ENCODE measurements at regions of chr11 and their contacts with region 1.

Region 1: GRCh38 chr11:12235947-12236743 is 125.8 kb downstream of the MICAL2 start:
- DNase-seq: peak; percentile 89
- ATAC-seq: peak; percentile 86
- H3K4me3 Mint-ChIP-seq: peak overlapping the region; percentile 31
- H3K27ac Mint-ChIP-seq: peak overlapping the region; percentile 91
- H3K4me1 Mint-ChIP-seq: peaks cover 41% of the 10 kb centered on the region
- H3K27me3 Mint-ChIP-seq: no peaks in the 10 kb centered on the region

Region 2: GRCh38 chr11:12052676-12053605 is 183.2 kb before region 1 on chr11:
- CTCF ChIA-PET with region 1: interaction called, 34 read pairs
- DNase-seq: peak; percentile 62
- ATAC-seq: peak; percentile 69
- H3K4me3 Mint-ChIP-seq: no peak overlapping the region
- H3K27ac Mint-ChIP-seq: no peak overlapping the region
- H3K4me1 Mint-ChIP-seq: peaks cover 4% of the 10 kb centered on the region
- H3K27me3 Mint-ChIP-seq: no peaks in the 10 kb centered on the region

Region 3: DNA sequence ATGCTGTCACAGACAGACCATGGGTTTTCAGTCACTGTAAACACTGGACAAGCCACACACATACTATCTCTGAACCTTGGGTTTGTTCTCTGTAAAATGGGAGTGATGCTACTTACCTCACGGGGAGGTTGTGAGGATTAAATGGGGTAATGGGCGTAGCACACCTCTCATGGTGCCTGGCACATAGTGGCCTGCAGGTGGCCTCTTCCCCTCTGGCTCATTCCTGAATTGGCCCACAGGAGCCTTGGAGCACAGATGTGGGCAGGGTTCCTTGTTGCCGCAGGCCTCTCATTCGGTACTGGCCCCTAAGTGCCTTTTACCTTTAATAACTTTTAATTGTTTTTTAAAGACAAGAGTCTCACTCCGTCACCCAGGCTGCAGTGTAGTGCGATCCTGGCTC is 114.1 kb before region 1 on chr11:
- CTCF ChIA-PET with region 1: interaction called, 10 read pairs
- DNase-seq: no peak
- ATAC-seq: no peak
- H3K4me3 Mint-ChIP-seq: no peak overlapping the region
- H3K27ac Mint-ChIP-seq: no peak overlapping the region
- H3K4me1 Mint-ChIP-seq: peaks cover 53% of the 10 kb centered on the region
- H3K27me3 Mint-ChIP-seq: no peaks in the 10 kb centered on the region

Region 4: GRCh38 chr11:12157241-12157661 is 78.9 kb before region 1 on chr11:
- CTCF ChIA-PET with region 1: interaction called, 19 read pairs
- DNase-seq: peak; percentile 49
- ATAC-seq: peak; percentile 77
- H3K4me3 Mint-ChIP-seq: no peak overlapping the region
- H3K27ac Mint-ChIP-seq: peak overlapping the region; percentile 89
- H3K4me1 Mint-ChIP-seq: peaks cover 72% of the 10 kb centered on the region
- H3K27me3 Mint-ChIP-seq: no peaks in the 10 kb centered on the region

Region 5: DNA sequence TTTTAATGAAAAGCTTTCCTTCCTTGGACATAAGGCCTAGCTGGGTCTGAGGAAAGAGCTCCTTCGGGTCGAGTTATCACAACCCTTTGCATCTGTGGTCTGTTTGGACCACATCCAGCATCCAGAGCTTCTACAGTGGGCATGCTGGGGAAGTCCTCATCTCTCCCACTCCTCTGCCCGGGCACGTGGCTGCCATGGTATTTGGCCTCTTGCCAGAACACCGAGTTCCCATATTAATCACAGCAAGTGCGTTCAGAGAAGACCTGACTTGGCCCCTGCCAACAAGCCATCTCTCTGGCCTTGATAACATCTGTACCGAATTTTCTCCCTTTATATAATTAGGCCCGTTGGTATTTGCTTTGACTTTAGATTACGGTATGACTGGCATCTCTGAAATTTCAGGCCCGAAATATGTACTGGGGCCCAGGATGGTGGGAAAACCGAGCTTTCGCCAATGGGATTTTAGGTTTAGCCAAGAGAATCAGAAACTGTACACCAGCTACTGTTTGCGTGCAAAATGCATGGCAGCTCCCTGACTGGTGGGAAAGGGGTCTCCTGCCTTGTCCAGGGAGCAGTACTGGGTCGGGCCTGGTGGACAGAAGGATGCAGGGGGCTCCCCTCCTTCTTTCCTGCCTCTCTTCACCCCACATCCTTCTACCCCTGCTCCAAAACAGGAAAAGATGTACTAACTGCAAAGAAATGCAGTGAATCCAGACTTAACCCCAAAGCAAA is 35.7 kb before region 1 on chr11:
- CTCF ChIA-PET with region 1: interaction called, 13 read pairs
- DNase-seq: no peak
- ATAC-seq: no peak
- H3K4me3 Mint-ChIP-seq: no peak overlapping the region
- H3K27ac Mint-ChIP-seq: peak overlapping the region; percentile 96
- H3K4me1 Mint-ChIP-seq: peaks cover 71% of the 10 kb centered on the region
- H3K27me3 Mint-ChIP-seq: no peaks in the 10 kb centered on the region

Region 6: GRCh38 chr11:12281571-12282478 is 45.7 kb after region 1 on chr11:
- CTCF ChIA-PET with region 1: interaction called, 23 read pairs
- DNase-seq: peak; percentile 84
- ATAC-seq: peak; percentile 77
- H3K4me3 Mint-ChIP-seq: no peak overlapping the region
- H3K27ac Mint-ChIP-seq: no peak overlapping the region
- H3K4me1 Mint-ChIP-seq: peaks cover 3% of the 10 kb centered on the region
- H3K27me3 Mint-ChIP-seq: no peaks in the 10 kb centered on the region

Region 7: DNA sequence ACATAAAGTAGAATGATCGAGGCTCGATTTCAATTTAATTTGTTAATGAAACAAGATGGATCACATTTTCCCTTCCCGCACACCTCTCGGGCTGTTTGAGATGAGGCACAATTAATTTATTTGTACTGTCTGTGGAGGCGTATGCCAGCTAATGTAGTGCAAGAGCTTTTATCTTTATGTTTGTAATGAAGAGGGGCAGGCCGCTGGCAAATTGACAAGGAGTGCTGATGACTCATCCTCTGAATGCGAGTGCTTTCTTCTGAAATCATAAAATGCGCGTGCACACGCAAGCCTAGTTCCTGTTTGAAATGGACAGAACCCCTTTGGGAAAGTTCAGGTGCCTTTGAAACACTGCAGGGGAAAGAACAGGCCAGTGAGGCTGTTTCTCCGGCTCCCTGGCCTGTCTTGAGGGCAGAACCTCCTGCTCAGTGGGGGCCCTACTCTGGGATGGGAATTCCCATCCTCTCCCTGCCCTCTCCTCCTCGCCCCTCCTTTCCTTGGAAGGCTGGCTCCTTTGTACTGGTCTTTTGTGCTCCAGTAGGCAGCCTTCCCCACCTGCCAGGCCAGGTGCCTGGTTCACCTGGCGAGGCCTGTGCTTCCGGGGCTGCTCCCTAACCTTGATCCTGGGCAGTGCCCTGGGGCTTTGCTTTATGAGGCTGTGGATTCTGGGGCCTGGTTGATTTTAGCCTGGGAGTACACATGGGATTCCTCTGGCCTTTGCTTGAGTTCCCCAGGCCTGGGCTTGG is 488.3 kb after region 1 on chr11:
- CTCF ChIA-PET with region 1: no interaction called
- DNase-seq: no peak
- ATAC-seq: no peak
- H3K4me3 Mint-ChIP-seq: no peak overlapping the region
- H3K27ac Mint-ChIP-seq: no peak overlapping the region
- H3K4me1 Mint-ChIP-seq: peaks cover 5% of the 10 kb centered on the region
- H3K27me3 Mint-ChIP-seq: peaks cover 80% of the 10 kb centered on the region

Measured in activated CD8-positive, alpha-beta memory T cell treated with anti-CD3 and anti-CD28 coated beads, Interleukin-2, amount 10 ng/mL, durations not matched to agents 7 days and 5 days (primary cell).